ENCODE measurements at regions of chr9 and their contacts with region 1.

Region 1: GRCh38 chr9:84369762-84370161 is 29.2 kb upstream of the SLC28A3 start:
- DNase-seq: no peak
- ATAC-seq: no peak
- H3K4me3 Mint-ChIP-seq: no peak overlapping the region
- H3K27ac Mint-ChIP-seq: no peak overlapping the region
- H3K4me1 Mint-ChIP-seq: no peaks in the 10 kb centered on the region
- H3K27me3 Mint-ChIP-seq: peaks cover 5% of the 10 kb centered on the region
- CTCF ChIP-seq: no peak

Region 2: DNA sequence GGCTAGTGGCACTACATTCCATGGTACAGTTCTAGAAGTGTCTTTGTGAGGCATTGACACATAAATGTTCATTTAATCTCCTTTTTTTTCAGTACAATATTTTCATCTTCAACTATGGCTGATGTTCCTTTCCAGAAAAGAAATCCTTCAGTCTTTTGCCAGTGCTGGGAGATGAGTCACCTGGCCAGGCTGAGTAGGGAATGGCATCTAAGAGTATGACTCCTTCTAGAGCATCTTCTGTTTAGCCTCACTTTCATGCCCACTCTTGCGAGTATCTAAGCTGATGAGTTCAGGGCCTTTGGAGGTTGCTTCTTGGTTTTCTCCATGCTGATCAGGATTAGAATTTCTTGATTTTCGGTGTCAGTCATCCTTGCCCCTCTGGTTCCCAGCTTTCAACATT is 153.6 kb before region 1 on chr9:
- CTCF ChIA-PET with region 1: no interaction called
- POLR2A ChIA-PET with region 1: no interaction called
- intact Hi-C with region 1: no loop called
- DNase-seq: no peak
- ATAC-seq: no peak
- H3K4me3 Mint-ChIP-seq: no peak overlapping the region
- H3K27ac Mint-ChIP-seq: no peak overlapping the region
- H3K4me1 Mint-ChIP-seq: no peaks in the 10 kb centered on the region
- H3K27me3 Mint-ChIP-seq: peaks cover 3% of the 10 kb centered on the region
- CTCF ChIP-seq: no peak

Region 3: GRCh38 chr9:84271531-84271900 is 98.2 kb before region 1 on chr9:
- CTCF ChIA-PET with region 1: no interaction called
- POLR2A ChIA-PET with region 1: no interaction called
- intact Hi-C with region 1: no loop called
- DNase-seq: peak; percentile 21
- ATAC-seq: peak; percentile 98
- H3K4me3 Mint-ChIP-seq: peak overlapping the region; percentile 77
- H3K27ac Mint-ChIP-seq: no peak overlapping the region
- H3K4me1 Mint-ChIP-seq: peaks cover 22% of the 10 kb centered on the region
- H3K27me3 Mint-ChIP-seq: peaks cover 14% of the 10 kb centered on the region
- CTCF ChIP-seq: no peak

Region 4: DNA sequence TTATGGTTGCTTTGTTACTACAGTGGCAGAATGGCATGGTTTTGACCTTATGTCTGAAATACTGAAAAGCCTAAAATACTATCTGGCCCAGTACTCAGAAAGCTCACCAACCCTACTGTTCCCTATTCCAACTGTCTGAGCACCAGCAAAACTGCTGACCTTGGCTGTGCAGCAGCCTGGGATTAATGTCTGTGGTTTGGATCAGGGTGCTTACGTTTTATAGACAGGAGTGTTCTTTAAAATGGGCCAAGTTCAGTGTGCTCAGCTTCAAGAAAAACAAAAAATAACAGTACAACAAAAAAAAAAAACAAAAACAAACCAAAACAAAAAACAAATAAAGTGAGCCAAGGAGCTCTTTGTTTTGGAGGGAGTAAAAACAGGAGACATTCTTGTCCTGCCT is 65.6 kb before region 1 on chr9:
- CTCF ChIA-PET with region 1: no interaction called
- POLR2A ChIA-PET with region 1: no interaction called
- intact Hi-C with region 1: no loop called
- DNase-seq: no peak
- ATAC-seq: no peak
- H3K4me3 Mint-ChIP-seq: no peak overlapping the region
- H3K27ac Mint-ChIP-seq: no peak overlapping the region
- H3K4me1 Mint-ChIP-seq: no peaks in the 10 kb centered on the region
- H3K27me3 Mint-ChIP-seq: no peaks in the 10 kb centered on the region
- CTCF ChIP-seq: no peak

Region 5: GRCh38 chr9:84436386-84437109 is 66.8 kb after region 1 on chr9:
- CTCF ChIA-PET with region 1: no interaction called
- POLR2A ChIA-PET with region 1: no interaction called
- intact Hi-C with region 1: no loop called
- DNase-seq: no peak
- ATAC-seq: no peak
- H3K4me3 Mint-ChIP-seq: no peak overlapping the region
- H3K27ac Mint-ChIP-seq: no peak overlapping the region
- H3K4me1 Mint-ChIP-seq: no peaks in the 10 kb centered on the region
- H3K27me3 Mint-ChIP-seq: no peaks in the 10 kb centered on the region
- CTCF ChIP-seq: no peak

Region 6: GRCh38 chr9:85917756-85918155 is 1548.0 kb after region 1 on chr9:
- CTCF ChIA-PET with region 1: no interaction called
- POLR2A ChIA-PET with region 1: interaction called, 12 read pairs
- intact Hi-C with region 1: no loop called
- DNase-seq: no peak
- ATAC-seq: no peak
- H3K4me3 Mint-ChIP-seq: no peak overlapping the region
- H3K27ac Mint-ChIP-seq: no peak overlapping the region
- H3K4me1 Mint-ChIP-seq: no peaks in the 10 kb centered on the region
- H3K27me3 Mint-ChIP-seq: peaks cover 2% of the 10 kb centered on the region
- CTCF ChIP-seq: no peak